Activated CD8-positive, alpha-beta T cell treated with anti-CD3 and anti-CD28 coated beads for 36 hours (primary cell): ENCODE measurements at regions of chr18 and their contacts with region 1.

Region 1: DNA sequence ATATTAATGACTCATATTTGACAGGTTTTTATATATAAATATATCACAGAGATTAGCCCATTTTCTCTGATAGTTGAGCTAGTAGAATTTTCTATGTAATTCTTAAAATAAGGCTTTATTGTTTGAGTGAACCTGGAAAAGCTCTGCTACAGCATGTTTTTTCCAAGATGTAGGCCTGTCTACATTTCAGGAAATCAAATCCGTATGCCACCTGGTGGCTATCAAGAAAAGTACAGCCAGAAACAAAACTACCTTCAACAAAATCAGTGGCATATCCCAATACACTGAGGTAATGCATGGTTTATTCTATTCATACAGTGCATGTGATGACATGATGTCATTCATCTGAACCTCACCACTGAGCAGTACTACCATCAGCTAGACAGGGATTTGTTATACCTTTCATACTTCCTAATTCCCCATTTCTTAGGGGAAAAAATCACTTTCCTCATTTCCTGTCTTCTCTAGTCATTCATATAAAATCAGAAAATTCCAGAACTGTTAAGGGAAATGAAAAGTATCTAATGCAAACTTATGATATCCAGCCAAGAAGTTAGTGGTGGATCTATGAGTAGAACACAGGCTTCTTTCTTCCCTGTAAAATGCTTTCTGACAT is 310.4 kb upstream of the SYT4 start:
- DNase-seq: no peak
- ATAC-seq: no peak
- H3K4me3 Mint-ChIP-seq: no peak overlapping the region
- H3K27ac Mint-ChIP-seq: no peak overlapping the region
- H3K4me1 Mint-ChIP-seq: no peaks in the 10 kb centered on the region
- H3K27me3 Mint-ChIP-seq: no peaks in the 10 kb centered on the region
- CTCF ChIP-seq: peak; percentile 77

Region 2: GRCh38 chr18:43571078-43571689 is 16.5 kb before region 1 on chr18:
- CTCF ChIA-PET with region 1: interaction called, 78 read pairs
- POLR2A ChIA-PET with region 1: no interaction called
- intact Hi-C with region 1: no loop called
- DNase-seq: peak; percentile 44
- ATAC-seq: peak; percentile 45
- H3K4me3 Mint-ChIP-seq: no peak overlapping the region
- H3K27ac Mint-ChIP-seq: no peak overlapping the region
- H3K4me1 Mint-ChIP-seq: no peaks in the 10 kb centered on the region
- H3K27me3 Mint-ChIP-seq: no peaks in the 10 kb centered on the region
- CTCF ChIP-seq: peak; percentile 65